HEK293T (cell line): ENCODE measurements at regions of chr17 and their contacts with region 1.

Region 1: GRCh38 chr17:75109407-75110233 is at the start of gene ARMC7:
- DNase-seq: peak; percentile 95

Region 2: GRCh38 chr17:75034236-75034908 is 75.2 kb before region 1 on chr17:
- CTCF ChIA-PET with region 1: interaction called, 13 read pairs
- POLR2A ChIA-PET with region 1: interaction called, 21 read pairs
- DNase-seq: peak; percentile 69

Region 3: DNA sequence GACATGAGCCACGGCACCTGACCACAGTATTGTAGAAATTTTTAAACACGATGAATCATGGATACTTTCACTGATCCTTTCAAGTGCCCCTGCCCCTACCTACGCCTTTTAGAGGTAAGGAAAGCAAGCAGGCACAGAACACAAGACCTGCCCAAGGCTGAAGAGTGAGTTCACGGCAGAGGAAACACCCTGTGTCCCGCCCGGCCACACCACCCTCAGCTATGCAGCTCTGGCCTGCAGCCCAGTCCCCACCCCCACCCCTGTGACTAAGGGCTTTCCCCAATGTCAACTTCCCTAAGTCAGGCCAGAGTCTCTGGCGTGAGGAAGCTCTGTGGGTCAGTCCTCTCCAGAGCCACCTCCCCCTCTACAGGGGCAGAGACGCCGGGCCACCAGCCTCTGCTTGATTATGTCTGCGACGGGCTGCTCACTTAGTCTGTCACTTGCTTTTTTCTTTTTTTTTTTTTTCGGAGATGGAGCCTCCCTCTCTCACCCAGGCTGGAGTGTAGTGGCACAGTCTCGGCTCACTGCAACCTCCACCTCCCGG is 13.5 kb before region 1 on chr17:
- CTCF ChIA-PET with region 1: interaction called, 21 read pairs
- POLR2A ChIA-PET with region 1: interaction called, 10 read pairs
- DNase-seq: no peak

Region 4: DNA sequence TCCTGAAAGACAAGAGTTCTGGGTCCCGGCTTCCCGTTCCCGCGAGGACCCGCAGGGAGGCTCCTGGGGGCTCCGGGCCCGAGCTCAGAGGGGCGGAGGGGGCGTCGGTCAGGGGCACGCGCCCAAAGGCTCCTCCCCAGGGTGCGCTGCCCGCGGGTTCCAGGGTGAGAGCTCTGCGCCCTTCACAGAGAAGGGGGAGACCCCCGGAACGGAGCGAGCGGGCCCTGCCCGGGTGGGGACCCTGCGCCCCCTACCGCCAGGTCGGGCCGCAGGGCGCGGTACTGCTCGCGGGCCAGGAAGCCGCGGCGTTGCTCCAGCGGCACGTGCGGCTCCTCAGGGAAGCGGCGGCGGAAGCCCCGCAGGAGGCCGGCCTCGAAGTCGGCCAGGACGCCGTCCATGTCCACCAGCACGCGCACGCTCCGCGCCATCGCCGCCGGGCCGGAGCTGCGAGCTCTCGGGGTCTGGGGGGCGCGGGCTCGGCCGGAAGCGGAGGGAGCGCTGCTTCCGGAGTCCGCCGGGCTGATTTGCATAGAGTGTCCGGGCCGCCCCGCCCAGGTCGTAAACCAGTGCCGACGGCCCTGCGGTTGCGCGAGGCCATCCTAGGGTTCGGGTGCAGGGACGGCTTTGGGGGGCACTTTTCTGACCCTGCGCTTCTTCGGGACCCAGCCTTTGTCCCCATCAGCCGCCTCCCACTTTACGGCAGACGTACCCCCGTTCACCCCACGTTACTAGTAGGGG is 21.8 kb after region 1 on chr17 and contains the start of gene NT5C:
- CTCF ChIA-PET with region 1: interaction called, 32 read pairs
- POLR2A ChIA-PET with region 1: interaction called, 68 read pairs
- DNase-seq: peak; percentile 91

Region 5: GRCh38 chr17:75199886-75200618 is 90.4 kb after region 1 on chr17:
- CTCF ChIA-PET with region 1: interaction called, 44 read pairs
- POLR2A ChIA-PET with region 1: interaction called, 6 read pairs
- DNase-seq: no peak

Region 6: GRCh38 chr17:75238684-75239191 is 129.1 kb after region 1 on chr17:
- CTCF ChIA-PET with region 1: interaction called, 11 read pairs
- POLR2A ChIA-PET with region 1: interaction called, 4 read pairs
- DNase-seq: peak; percentile 86